ENCODE measurements at regions of chr21 and their contacts with region 1.

Region 1: GRCh38 chr21:25005388-25005787 is 601.9 kb downstream of the MRPL39 start:
- DNase-seq: no peak
- H3K4me3 Mint-ChIP-seq: no peak overlapping the region
- H3K27ac Mint-ChIP-seq: no peak overlapping the region
- H3K4me1 Mint-ChIP-seq: no peaks in the 10 kb centered on the region
- H3K27me3 Mint-ChIP-seq: no peaks in the 10 kb centered on the region

Region 2: DNA sequence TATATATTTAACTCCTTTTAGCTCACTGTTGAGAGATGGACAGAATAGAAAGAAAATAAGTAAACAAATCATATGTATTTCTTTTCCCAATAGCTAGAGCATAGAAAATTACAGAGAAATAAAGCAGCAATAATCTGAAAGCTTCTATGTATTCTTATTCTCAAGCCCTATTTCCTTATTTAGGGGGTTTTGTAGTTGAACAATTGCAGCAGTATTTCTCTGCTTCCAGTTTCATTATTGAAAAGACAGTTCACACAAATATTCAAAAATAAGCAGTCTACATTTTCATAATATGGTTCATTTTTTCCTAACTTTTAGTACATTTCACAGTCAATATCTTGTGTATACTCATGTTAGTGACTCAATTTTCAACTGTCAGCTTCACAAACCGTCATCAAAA is 36.3 kb before region 1 on chr21:
- CTCF ChIA-PET with region 1: no interaction called
- POLR2A ChIA-PET with region 1: no interaction called
- DNase-seq: no peak
- H3K4me3 Mint-ChIP-seq: no peak overlapping the region
- H3K27ac Mint-ChIP-seq: no peak overlapping the region
- H3K4me1 Mint-ChIP-seq: no peaks in the 10 kb centered on the region
- H3K27me3 Mint-ChIP-seq: no peaks in the 10 kb centered on the region

Region 3: DNA sequence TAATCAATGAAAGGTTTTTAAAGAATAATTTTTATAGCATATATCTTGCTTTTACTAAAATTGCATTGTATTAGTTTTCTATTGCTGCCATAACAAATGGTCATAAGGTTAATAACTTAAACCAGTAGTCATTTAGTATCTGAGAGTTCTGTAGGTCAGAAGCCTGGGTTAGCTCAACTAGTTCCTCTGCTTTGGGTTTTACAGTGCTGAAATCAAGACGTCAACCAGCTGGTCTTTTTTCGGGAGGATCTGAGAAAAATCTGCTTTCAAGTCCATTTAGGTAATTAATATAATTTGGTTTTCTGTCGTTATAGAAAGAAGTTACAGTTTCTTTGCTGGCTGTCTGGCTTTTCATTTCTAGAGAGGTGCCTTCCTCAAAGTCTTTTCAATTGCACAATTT is 24.2 kb after region 1 on chr21:
- CTCF ChIA-PET with region 1: no interaction called
- POLR2A ChIA-PET with region 1: no interaction called
- DNase-seq: no peak
- H3K4me3 Mint-ChIP-seq: no peak overlapping the region
- H3K27ac Mint-ChIP-seq: no peak overlapping the region
- H3K4me1 Mint-ChIP-seq: no peaks in the 10 kb centered on the region
- H3K27me3 Mint-ChIP-seq: no peaks in the 10 kb centered on the region

Region 4: DNA sequence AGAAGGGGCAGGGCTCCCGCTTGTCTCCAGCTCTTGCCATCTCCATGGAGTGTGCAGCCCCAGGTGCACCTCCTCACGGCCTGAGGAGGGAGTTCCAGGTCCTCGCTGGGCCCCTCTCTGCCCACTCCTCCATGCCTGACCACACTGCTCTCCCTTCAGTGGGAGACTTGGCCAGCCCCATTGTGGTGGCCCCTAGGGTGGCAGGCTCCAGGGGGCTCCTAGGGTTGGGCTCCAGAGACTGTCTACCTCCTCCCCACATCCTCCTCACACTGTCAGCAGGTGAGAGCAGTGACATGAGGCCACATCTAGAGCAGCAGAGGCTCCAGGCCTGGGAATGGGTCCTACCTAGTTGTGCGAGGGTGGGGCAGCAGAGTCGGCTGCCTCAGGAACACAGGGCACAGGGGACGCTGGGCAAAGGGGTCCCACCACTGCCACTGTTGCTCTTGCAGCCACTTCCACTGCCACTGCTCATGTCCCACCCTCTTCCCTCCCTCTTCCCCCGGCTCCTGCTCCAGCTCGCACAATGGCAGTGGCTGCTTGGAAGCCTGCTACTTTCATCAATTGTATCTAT is 87.1 kb after region 1 on chr21:
- CTCF ChIA-PET with region 1: interaction called, 10 read pairs
- POLR2A ChIA-PET with region 1: no interaction called
- DNase-seq: no peak
- H3K4me3 Mint-ChIP-seq: no peak overlapping the region
- H3K27ac Mint-ChIP-seq: no peak overlapping the region
- H3K4me1 Mint-ChIP-seq: no peaks in the 10 kb centered on the region
- H3K27me3 Mint-ChIP-seq: no peaks in the 10 kb centered on the region

Measured in activated CD4-positive, alpha-beta T cell treated with anti-CD3 and anti-CD28 coated beads, Interleukin-2, amount 10 ng/mL, durations not matched to agents 7 days and 5 days (primary cell).